Prostate gland (tissue), 2 donors: ENCODE measurements at regions of chr14 and their contacts with region 1.

Region 1: DNA sequence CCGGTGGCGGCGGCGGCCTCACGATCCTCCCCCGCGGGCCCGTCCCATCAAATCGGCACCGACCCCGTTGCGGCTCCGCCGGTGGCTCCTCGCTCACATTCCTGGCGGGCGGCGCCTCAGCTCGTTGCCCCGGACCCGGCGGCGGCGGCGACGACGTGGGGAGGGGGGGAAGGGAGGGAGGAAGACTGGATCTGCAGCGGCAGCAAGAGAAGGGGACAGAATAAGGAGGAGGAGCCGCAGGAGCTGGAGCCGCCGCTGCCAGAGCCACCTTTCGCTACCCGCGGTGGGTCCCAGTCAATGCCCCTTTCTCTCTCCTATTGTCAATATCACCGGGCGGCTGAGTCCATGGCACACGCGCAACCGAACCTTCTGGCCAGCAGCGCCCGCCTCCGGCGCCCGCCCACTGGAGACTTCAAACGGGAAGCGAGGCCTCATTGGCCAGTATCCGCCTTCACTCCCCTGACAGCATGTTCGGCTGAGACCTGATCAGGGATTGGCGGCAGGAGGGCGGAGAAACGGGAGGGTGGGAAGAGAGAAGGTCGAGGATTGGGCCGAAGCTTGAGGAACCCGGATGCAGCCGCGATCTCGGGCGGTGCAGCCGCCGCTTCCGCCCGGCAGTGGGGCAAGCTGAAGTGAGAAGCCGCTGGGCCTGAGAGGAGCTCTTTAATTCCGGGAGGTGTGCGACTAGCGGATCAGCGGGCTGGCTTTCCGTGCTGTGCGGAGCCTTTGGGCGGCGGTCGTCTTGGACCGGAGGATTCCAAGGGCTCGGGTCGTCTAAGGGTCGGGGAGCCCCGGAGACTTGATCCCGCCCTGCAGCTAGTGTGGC is at the start of gene PPP2R5E:
- DNase-seq: peak; percentile 99
- H3K4me3 ChIP-seq: peak within 1 kb of the TSS; percentile 71 to 91
- H3K27ac ChIP-seq: peak within 1 kb of the TSS; percentile 85 to 89
- H3K4me1 ChIP-seq: no peaks in the 10 kb centered on the region
- H3K27me3 ChIP-seq: no peaks in the 10 kb centered on the region
- CTCF ChIP-seq: no peak
- POLR2A ChIP-seq: peak; percentile 63
- total RNA-seq, gene PPP2R5E: 23.5 to 30.0 TPM

Region 2: GRCh38 chr14:63388763-63389431 is 154.3 kb before region 1 on chr14:
- intact Hi-C with region 1: loop called (anchors 2 kb)
- DNase-seq: peak; percentile 30
- H3K4me3 ChIP-seq: no peak overlapping the region
- H3K27ac ChIP-seq: no peak overlapping the region
- H3K4me1 ChIP-seq: no peaks in the 10 kb centered on the region
- H3K27me3 ChIP-seq: no peaks in the 10 kb centered on the region
- CTCF ChIP-seq: peak; percentile 59 to 84 (median 73)
- POLR2A ChIP-seq: no peak

Region 3: GRCh38 chr14:63437953-63438757 is 105.1 kb before region 1 on chr14:
- intact Hi-C with region 1: loop called (anchors 5 kb)
- DNase-seq: peak; percentile 91
- H3K4me3 ChIP-seq: no peak overlapping the region
- H3K27ac ChIP-seq: peak overlapping the region; percentile 2 to 41
- H3K4me1 ChIP-seq: peaks cover 7% of the 10 kb centered on the region
- H3K27me3 ChIP-seq: no peaks in the 10 kb centered on the region
- CTCF ChIP-seq: peak in 1 of 4 experiments; percentile 5
- POLR2A ChIP-seq: no peak

Region 4: GRCh38 chr14:63641473-63642228 is 98.4 kb after region 1 on chr14 and contains the start of gene WDR89:
- intact Hi-C with region 1: loop called (anchors 5 kb)
- DNase-seq: peak; percentile 99
- H3K4me3 ChIP-seq: peak within 1 kb of the TSS; percentile 49 to 53
- H3K27ac ChIP-seq: peak within 1 kb of the TSS; percentile 95 to 96
- H3K4me1 ChIP-seq: peaks cover 2% of the 10 kb centered on the region
- H3K27me3 ChIP-seq: no peaks in the 10 kb centered on the region
- CTCF ChIP-seq: peak; percentile 34 to 85 (median 71)
- POLR2A ChIP-seq: peak; percentile 79
- total RNA-seq, gene WDR89: 4.9 to 8.9 TPM

Region 5: GRCh38 chr14:63727774-63728728 is 184.8 kb after region 1 on chr14 and contains the start of gene SGPP1:
- intact Hi-C with region 1: loop called (anchors 2 kb)
- DNase-seq: peak; percentile 58
- H3K4me3 ChIP-seq: peak within 1 kb of the TSS; percentile 97 to 98
- H3K27ac ChIP-seq: peak within 1 kb of the TSS; percentile 77 to 82
- H3K4me1 ChIP-seq: no peaks in the 10 kb centered on the region
- H3K27me3 ChIP-seq: no peaks in the 10 kb centered on the region
- CTCF ChIP-seq: peak in 3 of 4 experiments; percentile 12 to 30 (median 28)
- POLR2A ChIP-seq: peak; percentile 48
- total RNA-seq, gene SGPP1: 19.7 to 37.5 TPM